ENCODE measurements at regions of chr9 and their contacts with region 1.

Region 1: GRCh38 chr9:121267689-121268597 is at the start of gene GSN:
- DNase-seq: peak; percentile 94
- H3K4me3 ChIP-seq: peak within 1 kb of the TSS; percentile 85 to 96 (median 92)
- H3K27ac ChIP-seq: peak within 1 kb of the TSS; percentile 94 to 99 (median 97)
- H3K4me1 ChIP-seq: peaks cover 0 to 81% (median 63%) of the 10 kb centered on the region in 4 donors
- H3K27me3 ChIP-seq: no peaks in the 10 kb centered on the region
- CTCF ChIP-seq: peak in 1 of 4 experiments; percentile 13
- EP300 ChIP-seq: no peak
- POLR2A ChIP-seq: peak; percentile 92 to 98
- total RNA-seq, gene GSN: 1,610 to 2,826 (median 1,919) TPM

Region 2: GRCh38 chr9:120998111-120998510 is 269.8 kb before region 1 on chr9:
- intact Hi-C with region 1: no loop called
- DNase-seq: no peak
- H3K4me3 ChIP-seq: no peak overlapping the region
- H3K27ac ChIP-seq: no peak overlapping the region
- H3K4me1 ChIP-seq: no peaks in the 10 kb centered on the region
- H3K27me3 ChIP-seq: no peaks in the 10 kb centered on the region
- CTCF ChIP-seq: no peak
- EP300 ChIP-seq: no peak
- POLR2A ChIP-seq: no peak

Region 3: GRCh38 chr9:121009650-121010049 is 258.3 kb before region 1 on chr9:
- intact Hi-C with region 1: no loop called
- DNase-seq: no peak
- H3K4me3 ChIP-seq: no peak overlapping the region
- H3K27ac ChIP-seq: no peak overlapping the region
- H3K4me1 ChIP-seq: no peaks in the 10 kb centered on the region
- H3K27me3 ChIP-seq: no peaks in the 10 kb centered on the region
- CTCF ChIP-seq: no peak
- EP300 ChIP-seq: no peak
- POLR2A ChIP-seq: no peak

Region 4: GRCh38 chr9:121289026-121289771 is 21.3 kb after region 1 on chr9:
- intact Hi-C with region 1: loop called (anchors 2 kb)
- DNase-seq: peak; percentile 94
- H3K4me3 ChIP-seq: peak overlapping the region in 2 of 4 donors; percentile 8 to 16
- H3K27ac ChIP-seq: peak overlapping the region; percentile 94 to 99 (median 97)
- H3K4me1 ChIP-seq: peaks cover 2 to 99% (median 93%) of the 10 kb centered on the region in 4 donors
- H3K27me3 ChIP-seq: no peaks in the 10 kb centered on the region
- CTCF ChIP-seq: no peak
- EP300 ChIP-seq: peak in 1 of 4 donors; percentile 15
- POLR2A ChIP-seq: no peak

Region 5: GRCh38 chr9:121299467-121300234 is 31.7 kb after region 1 on chr9:
- intact Hi-C with region 1: no loop called
- DNase-seq: peak; percentile 93
- H3K4me3 ChIP-seq: peak overlapping the region; percentile 41 to 67 (median 62)
- H3K27ac ChIP-seq: peak overlapping the region; percentile 94 to 99 (median 97)
- H3K4me1 ChIP-seq: peaks cover 0 to 96% (median 94%) of the 10 kb centered on the region in 4 donors
- H3K27me3 ChIP-seq: no peaks in the 10 kb centered on the region
- CTCF ChIP-seq: no peak
- EP300 ChIP-seq: no peak
- POLR2A ChIP-seq: peak in 1 of 2 donors; percentile 37

Region 6: DNA sequence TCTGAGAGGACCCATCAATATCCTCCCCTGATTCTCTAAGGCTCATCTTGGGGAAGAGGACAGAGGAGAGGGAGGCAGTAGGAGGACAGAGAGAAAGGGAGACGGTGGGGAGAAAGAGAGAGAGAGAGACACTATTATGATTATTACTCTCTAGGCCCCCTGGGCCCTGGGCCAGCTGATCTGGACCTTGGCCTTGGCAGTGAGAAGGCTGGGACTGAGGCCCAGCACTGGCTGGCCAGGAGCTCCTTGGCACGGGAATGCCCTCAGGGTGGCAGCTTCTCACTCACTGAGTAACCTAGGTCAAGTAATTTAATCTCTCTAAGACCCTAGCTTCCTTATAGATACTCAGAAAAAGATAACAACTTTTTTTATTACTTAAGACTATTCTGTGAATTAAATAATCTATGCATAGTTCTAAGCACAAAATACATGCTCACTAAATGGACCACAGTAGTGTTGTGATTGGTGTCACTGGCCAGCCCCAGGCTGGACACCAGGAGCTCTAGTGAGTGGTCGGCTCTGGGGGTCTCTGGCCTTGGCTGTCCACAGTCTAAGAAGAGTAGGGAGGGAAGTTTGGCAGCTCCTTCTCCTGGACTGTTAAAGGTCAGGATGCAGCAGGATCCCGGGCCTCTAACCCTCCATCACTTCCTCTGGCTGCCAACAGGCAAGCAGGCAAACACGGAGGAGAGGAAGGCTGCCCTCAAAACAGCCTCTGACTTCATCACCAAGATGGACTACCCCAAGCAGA is 50.0 kb after region 1 on chr9:
- intact Hi-C with region 1: loop called (anchors 2 kb)
- DNase-seq: no peak
- H3K4me3 ChIP-seq: no peak overlapping the region
- H3K27ac ChIP-seq: peak overlapping the region; percentile 91 to 99 (median 94)
- H3K4me1 ChIP-seq: peaks cover 0 to 78% (median 64%) of the 10 kb centered on the region in 4 donors
- H3K27me3 ChIP-seq: no peaks in the 10 kb centered on the region
- CTCF ChIP-seq: no peak
- EP300 ChIP-seq: no peak
- POLR2A ChIP-seq: no peak

Region 7: GRCh38 chr9:121369595-121370265 is 101.8 kb after region 1 on chr9 and contains the start of gene STOM:
- intact Hi-C with region 1: loop called (anchors 5 kb)
- DNase-seq: peak; percentile 97
- H3K4me3 ChIP-seq: peak within 1 kb of the TSS; percentile 59 to 82 (median 78)
- H3K27ac ChIP-seq: peak within 1 kb of the TSS; percentile 91 to 99 (median 96)
- H3K4me1 ChIP-seq: peaks cover 0 to 77% (median 69%) of the 10 kb centered on the region in 4 donors
- H3K27me3 ChIP-seq: no peaks in the 10 kb centered on the region
- CTCF ChIP-seq: no peak
- EP300 ChIP-seq: peak in 3 of 4 donors; percentile 26 to 88 (median 45)
- POLR2A ChIP-seq: peak; percentile 98 to 99
- total RNA-seq, gene STOM: 303 to 609 (median 321) TPM

Measured in sigmoid colon (tissue), 7 donors.